K562 (cell line): ENCODE measurements at regions of chr2 and their contacts with region 1.

Region 1: DNA sequence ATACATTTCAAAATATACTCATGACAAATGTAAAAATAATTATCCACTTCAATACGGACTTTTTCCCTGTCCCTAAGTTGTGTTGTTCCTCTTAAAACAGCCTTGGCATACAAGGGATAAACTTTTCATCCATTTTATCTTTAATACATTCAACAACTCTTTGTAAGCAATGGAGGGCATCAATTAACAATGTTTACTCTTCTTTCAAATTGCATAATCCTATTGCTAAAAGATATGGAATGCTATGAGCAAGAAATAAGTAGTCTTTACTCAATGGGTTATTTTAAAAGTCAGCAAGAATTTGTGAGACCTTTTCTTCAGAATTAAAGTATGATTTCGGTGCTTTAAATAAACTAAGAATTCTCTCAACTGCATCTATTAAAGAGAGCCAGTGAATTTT is 41.9 kb downstream of the SCN9A start:
- DNase-seq: no peak
- ATAC-seq: no peak
- H3K4me3 ChIP-seq: no peak overlapping the region
- H3K27ac ChIP-seq: no peak overlapping the region
- H3K4me1 ChIP-seq: no peaks in the 10 kb centered on the region; a peak in 1 of 5 replicates
- H3K27me3 ChIP-seq: no peaks in the 10 kb centered on the region
- CTCF ChIP-seq: no peak
- EP300 ChIP-seq: no peak
- POLR2A ChIP-seq: no peak
- RAD21 ChIP-seq: no peak

Region 2: GRCh38 chr2:166351319-166351718 is 17.5 kb after region 1 on chr2:
- CTCF ChIA-PET with region 1: no interaction called
- POLR2A ChIA-PET with region 1: interaction called, 3 read pairs
- in situ Hi-C with region 1: no loop called
- intact Hi-C with region 1: loop called (anchors 2 kb)
- DNase-seq: no peak
- ATAC-seq: no peak
- H3K4me3 ChIP-seq: no peak overlapping the region
- H3K27ac ChIP-seq: no peak overlapping the region
- H3K4me1 ChIP-seq: peaks cover 0 to 8% of the 10 kb centered on the region in 2 experiments; a peak in 2 of 5 replicates
- H3K27me3 ChIP-seq: no peaks in the 10 kb centered on the region
- CTCF ChIP-seq: no peak
- EP300 ChIP-seq: no peak
- POLR2A ChIP-seq: no peak
- RAD21 ChIP-seq: no peak